Dorsolateral prefrontal cortex (tissue), 120 donors: ENCODE measurements at regions of chr5 and their contacts with region 1.

Region 1: GRCh38 chr5:36690041-36690961 is 83.9 kb downstream of the SLC1A3 start:
- DNase-seq: peak; percentile 68 to 85 (median 81)
- H3K4me3 ChIP-seq: peak overlapping the region; percentile 34 to 81 (median 67)
- H3K27ac ChIP-seq: peak overlapping the region; percentile 44 to 97 (median 92)
- H3K27me3 ChIP-seq: no peaks in the 10 kb centered on the region
- CTCF ChIP-seq: peak in 55 of 56 donors; percentile 59 to 95 (median 85)

Region 2: GRCh38 chr5:36151434-36152323 is 538.6 kb before region 1 on chr5 and contains the starts of genes LMBRD2 and SKP2:
- intact Hi-C with region 1: loop called in 1 of 2 experiments (anchors 10 kb)
- DNase-seq: peak; percentile 97 to 100 (median 99)
- H3K4me3 ChIP-seq: peak within 1 kb of the TSS; percentile 69 to 100 (median 95)
- H3K27ac ChIP-seq: peak within 1 kb of the TSS in 58 of 59 donors; percentile 42 to 95 (median 83)
- H3K27me3 ChIP-seq: no peaks in the 10 kb centered on the region
- CTCF ChIP-seq: peak in 47 of 56 donors; percentile 7 to 69 (median 37)
- total RNA-seq, gene LMBRD2: 22.9 to 79.1 (median 51.0) TPM
- total RNA-seq, gene SKP2: 11.3 to 30.0 (median 19.1) TPM

Region 3: GRCh38 chr5:36264202-36264760 is 426.0 kb before region 1 on chr5:
- intact Hi-C with region 1: loop called in 1 of 2 experiments (anchors 2 kb)
- DNase-seq: no peak
- H3K4me3 ChIP-seq: no peak overlapping the region
- H3K27ac ChIP-seq: peak overlapping the region in 2 of 59 donors; percentile 24 to 31
- H3K27me3 ChIP-seq: no peaks in the 10 kb centered on the region
- CTCF ChIP-seq: no peak

Region 4: GRCh38 chr5:36450229-36451024 is 239.9 kb before region 1 on chr5:
- intact Hi-C with region 1: no loop called
- DNase-seq: no peak
- H3K4me3 ChIP-seq: no peak overlapping the region
- H3K27ac ChIP-seq: no peak overlapping the region
- H3K27me3 ChIP-seq: peaks cover 0 to 3% (median 0%) of the 10 kb centered on the region in 45 donors
- CTCF ChIP-seq: no peak

Region 5: DNA sequence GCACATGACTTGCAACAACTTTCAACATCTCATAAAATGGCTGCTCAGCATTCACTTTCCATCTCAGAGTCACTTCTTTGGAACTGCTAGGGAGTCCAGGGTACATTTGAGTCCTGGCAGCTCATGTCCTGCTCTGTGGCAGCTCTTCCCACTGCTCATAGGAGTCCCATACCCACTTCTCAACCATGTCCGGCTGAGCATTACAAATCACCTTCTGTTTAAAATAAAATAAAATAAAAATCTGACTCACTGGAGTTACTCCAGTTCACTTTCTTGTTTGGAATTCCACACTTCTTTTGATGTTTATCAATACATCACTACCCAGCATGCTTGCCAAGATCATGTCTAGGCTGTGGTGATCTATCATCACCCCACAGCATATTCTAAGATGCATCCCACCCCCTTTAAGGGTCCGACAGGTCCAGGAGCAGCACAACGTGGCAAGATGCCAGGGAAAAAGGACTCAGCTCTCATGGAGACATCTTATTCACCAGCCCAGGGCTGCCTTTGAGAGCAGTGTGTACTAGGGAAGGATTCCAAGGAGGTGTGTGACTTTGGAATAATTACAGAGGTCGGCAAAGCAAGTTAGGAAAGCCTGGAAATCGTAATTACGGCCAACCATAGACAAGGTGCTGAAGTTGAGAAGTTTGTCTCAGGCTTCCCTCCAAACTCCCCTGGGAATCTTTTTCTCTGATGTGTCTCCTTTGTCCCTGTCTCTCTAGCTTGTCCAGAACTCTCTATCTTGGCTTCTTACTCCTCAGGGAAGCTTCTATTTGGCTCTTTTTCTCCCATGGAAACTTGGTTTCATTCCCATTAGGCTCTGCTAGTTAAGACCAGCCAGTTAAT is 195.3 kb before region 1 on chr5:
- intact Hi-C with region 1: no loop called
- DNase-seq: no peak
- H3K4me3 ChIP-seq: no peak overlapping the region
- H3K27ac ChIP-seq: peak overlapping the region in 48 of 59 donors; percentile 3 to 76 (median 60)
- H3K27me3 ChIP-seq: peaks cover 0 to 9% (median 0%) of the 10 kb centered on the region in 45 donors
- CTCF ChIP-seq: no peak

Region 6: GRCh38 chr5:36507332-36507952 is 182.9 kb before region 1 on chr5:
- intact Hi-C with region 1: loop called (anchors 5 kb)
- DNase-seq: peak; percentile 54 to 75 (median 64)
- H3K4me3 ChIP-seq: no peak overlapping the region
- H3K27ac ChIP-seq: no peak overlapping the region
- H3K27me3 ChIP-seq: no peaks in the 10 kb centered on the region
- CTCF ChIP-seq: peak; percentile 54 to 91 (median 79)